ENCODE measurements at regions of chr1 and their contacts with region 1.

Region 1: GRCh38 chr1:172745014-172745413 is 86.1 kb downstream of the FASLG start:
- DNase-seq: peak; percentile 26
- H3K4me3 Mint-ChIP-seq: no peak overlapping the region
- H3K27ac Mint-ChIP-seq: peak overlapping the region; percentile 4
- H3K4me1 Mint-ChIP-seq: peaks cover 29% of the 10 kb centered on the region
- H3K27me3 Mint-ChIP-seq: peaks cover 9% of the 10 kb centered on the region

Region 2: GRCh38 chr1:172682812-172683211 is 62.2 kb before region 1 on chr1:
- CTCF ChIA-PET with region 1: no interaction called
- POLR2A ChIA-PET with region 1: no interaction called
- intact Hi-C with region 1: no loop called
- DNase-seq: no peak
- H3K4me3 Mint-ChIP-seq: no peak overlapping the region
- H3K27ac Mint-ChIP-seq: no peak overlapping the region
- H3K4me1 Mint-ChIP-seq: peaks cover 31% of the 10 kb centered on the region
- H3K27me3 Mint-ChIP-seq: no peaks in the 10 kb centered on the region

Region 3: DNA sequence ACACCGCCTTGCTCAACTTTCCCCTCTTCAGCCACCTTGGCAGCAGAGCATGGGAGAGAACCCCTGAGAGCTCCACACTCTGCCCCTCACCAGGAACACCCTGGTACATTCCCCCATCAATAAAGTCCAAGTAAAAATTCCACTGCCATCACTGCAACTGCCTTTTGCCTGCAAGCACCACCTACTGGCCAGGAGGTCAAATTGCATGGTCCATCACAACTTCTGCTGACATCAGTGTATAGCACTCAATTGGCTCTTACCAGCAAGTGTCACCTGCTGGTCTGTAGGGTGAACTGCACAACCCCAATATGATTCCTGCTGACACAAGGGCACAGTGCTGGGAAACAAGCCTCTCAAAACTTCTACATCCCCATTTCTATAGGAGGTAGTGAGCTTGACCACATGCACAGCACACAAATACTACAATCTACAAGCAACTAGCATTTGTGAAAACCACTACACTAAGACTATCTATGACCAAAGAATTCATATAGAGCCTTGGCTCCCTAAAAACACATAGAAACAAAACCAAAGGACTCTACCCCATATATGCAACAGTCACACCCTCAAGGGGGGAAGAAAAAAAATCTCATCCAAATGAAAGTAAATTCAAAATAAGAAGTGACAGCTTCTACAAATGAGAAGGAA is 16.9 kb before region 1 on chr1:
- CTCF ChIA-PET with region 1: interaction called, 54 read pairs
- POLR2A ChIA-PET with region 1: no interaction called
- intact Hi-C with region 1: no loop called
- DNase-seq: peak; percentile 69
- H3K4me3 Mint-ChIP-seq: no peak overlapping the region
- H3K27ac Mint-ChIP-seq: no peak overlapping the region
- H3K4me1 Mint-ChIP-seq: peaks cover 18% of the 10 kb centered on the region
- H3K27me3 Mint-ChIP-seq: peaks cover 4% of the 10 kb centered on the region

Region 4: DNA sequence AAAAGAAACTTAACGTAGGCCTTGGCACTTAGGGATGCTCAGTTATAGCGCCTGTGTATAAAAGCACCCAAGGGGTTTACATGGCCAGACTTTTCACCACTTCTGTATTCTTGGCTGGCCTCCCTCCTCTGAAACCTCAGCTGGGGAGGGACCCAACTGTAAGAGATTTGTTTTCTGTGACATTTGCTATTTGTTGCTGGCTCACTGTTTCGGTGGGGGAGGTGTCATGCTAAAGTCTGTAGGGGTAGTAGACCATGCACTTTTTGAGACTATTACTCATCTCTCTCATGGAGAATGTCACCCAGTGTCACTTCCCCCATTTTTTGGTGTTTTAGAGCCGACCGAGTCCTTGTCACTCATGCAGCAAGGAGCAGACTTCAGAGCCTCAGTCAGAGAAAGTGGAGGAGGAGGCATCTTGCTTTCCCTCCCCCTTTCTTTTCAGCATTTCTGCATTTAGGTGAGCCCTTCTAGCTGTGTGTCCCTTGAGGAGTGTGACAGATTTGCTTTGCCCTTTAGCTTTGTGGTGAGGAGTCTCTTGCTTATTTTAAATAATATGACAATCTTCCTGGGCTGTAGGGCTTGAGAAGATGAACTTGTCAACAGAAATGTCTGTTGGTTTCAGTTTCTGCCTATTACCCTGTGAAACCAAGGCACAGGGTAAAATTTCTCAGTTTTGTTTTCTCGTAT is 74.0 kb after region 1 on chr1:
- CTCF ChIA-PET with region 1: interaction called, 25 read pairs
- POLR2A ChIA-PET with region 1: interaction called, 3 read pairs
- intact Hi-C with region 1: loop called (anchors 1 kb)
- DNase-seq: peak; percentile 69
- H3K4me3 Mint-ChIP-seq: peak overlapping the region; percentile 4
- H3K27ac Mint-ChIP-seq: peak overlapping the region; percentile 63
- H3K4me1 Mint-ChIP-seq: peaks cover 24% of the 10 kb centered on the region
- H3K27me3 Mint-ChIP-seq: peaks cover 11% of the 10 kb centered on the region

Region 5: DNA sequence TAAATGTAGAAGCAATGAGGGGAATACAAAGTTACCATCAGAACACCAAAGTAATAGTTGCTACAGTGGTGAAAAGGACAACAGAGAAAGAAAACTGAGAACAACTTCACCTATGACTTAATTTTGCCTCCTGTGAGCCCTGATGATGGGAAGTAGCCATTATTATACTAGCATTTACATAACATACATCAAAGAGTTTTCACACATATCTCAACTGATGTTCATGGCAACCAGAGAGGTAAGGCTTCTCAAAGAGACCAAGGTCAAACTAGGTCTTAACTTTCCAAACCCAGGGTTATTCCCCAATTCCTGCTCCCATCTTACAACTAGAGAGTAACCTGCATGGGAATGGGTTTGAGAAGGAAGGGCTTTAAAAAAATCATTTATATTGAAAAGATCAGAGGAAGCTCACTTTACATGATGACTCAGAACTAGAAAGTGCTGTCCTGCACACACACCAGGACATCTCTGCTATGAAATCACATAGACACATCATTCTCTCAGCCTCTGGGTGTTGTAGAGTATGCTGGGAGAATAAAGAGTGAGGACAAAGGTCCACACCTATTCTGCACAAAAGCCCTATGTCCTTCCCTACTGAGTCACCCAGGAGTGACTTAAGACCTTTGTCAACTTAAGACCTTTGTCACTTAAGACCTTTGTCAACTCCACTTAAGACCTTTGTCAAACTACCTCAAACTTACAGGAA is 126.0 kb after region 1 on chr1:
- CTCF ChIA-PET with region 1: interaction called, 3 read pairs
- POLR2A ChIA-PET with region 1: no interaction called
- intact Hi-C with region 1: loop called (anchors 1 kb)
- DNase-seq: no peak
- H3K4me3 Mint-ChIP-seq: no peak overlapping the region
- H3K27ac Mint-ChIP-seq: no peak overlapping the region
- H3K4me1 Mint-ChIP-seq: peaks cover 37% of the 10 kb centered on the region
- H3K27me3 Mint-ChIP-seq: peaks cover 13% of the 10 kb centered on the region

Region 6: DNA sequence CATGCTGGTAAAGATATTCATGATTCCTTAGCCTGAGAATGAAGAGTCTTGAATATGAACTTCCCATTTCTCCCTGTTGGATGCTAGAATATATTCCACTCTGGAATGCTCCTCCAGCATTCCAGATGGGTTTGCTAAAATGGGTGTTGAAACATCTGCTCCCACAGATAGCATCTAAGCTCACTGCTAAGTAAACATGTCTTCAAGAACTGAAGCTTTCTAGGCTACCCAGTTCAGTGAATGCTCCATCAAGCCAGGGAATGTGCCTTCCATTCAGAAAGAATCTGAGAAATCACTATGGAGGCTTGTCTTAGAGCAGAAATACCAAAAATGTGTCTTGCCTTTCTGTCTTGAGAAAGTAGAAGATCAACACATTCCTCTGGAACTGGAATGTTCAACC is 224.6 kb after region 1 on chr1:
- CTCF ChIA-PET with region 1: interaction called, 3 read pairs
- POLR2A ChIA-PET with region 1: no interaction called
- intact Hi-C with region 1: loop called (anchors 1 kb)
- DNase-seq: no peak
- H3K4me3 Mint-ChIP-seq: no peak overlapping the region
- H3K27ac Mint-ChIP-seq: no peak overlapping the region
- H3K4me1 Mint-ChIP-seq: peaks cover 10% of the 10 kb centered on the region
- H3K27me3 Mint-ChIP-seq: peaks cover 6% of the 10 kb centered on the region

Region 7: GRCh38 chr1:173297798-173298391 is 552.9 kb after region 1 on chr1:
- CTCF ChIA-PET with region 1: interaction called, 7 read pairs
- POLR2A ChIA-PET with region 1: no interaction called
- intact Hi-C with region 1: loop called (anchors 5 kb)
- DNase-seq: peak; percentile 69
- H3K4me3 Mint-ChIP-seq: no peak overlapping the region
- H3K27ac Mint-ChIP-seq: no peak overlapping the region
- H3K4me1 Mint-ChIP-seq: peaks cover 39% of the 10 kb centered on the region
- H3K27me3 Mint-ChIP-seq: peaks cover 1% of the 10 kb centered on the region

Region 8: DNA sequence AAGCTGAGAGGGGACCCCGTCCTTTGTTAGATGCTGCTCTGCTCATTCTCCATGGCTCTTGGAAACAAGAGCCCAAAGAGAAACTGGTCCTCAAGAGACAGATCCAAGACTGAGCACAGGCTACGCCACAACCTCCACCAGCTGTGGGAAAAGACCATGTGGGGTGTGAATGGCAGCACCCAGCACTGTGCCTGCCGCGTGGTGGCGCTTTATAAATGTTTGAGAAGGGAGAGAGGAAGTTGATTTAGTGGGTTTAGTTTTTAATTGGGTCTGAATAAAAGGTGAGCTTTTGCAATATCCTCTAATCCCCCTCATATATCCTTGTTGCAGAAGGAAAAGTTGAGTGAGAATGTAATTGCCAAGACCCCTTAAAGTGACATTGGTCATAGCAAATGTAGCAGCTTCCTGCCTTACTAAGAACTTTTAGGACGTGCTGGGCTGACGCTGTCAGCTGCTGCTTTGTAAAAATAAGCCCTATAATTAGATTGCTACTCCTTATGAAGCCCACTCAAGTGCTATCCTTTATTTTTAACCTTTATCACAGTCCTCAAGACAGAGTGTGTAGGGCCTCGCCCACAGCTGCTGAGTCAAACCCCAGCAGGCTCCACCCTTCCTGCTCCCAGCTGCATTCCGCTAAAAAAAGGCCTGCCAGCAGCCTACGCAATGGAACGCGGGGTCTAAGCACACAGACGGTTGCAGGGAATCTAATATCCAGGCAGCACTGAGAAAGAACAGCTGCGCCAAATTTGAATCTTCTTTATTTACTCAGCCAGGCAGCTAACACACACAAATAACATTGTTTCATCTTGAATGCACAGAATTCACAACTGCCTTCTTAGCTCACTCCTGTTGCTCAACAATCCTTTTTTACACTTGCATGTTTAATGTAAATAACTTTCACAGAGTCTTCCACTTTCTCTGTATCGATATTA is 684.7 kb after region 1 on chr1:
- CTCF ChIA-PET with region 1: interaction called, 17 read pairs
- POLR2A ChIA-PET with region 1: no interaction called
- intact Hi-C with region 1: no loop called
- DNase-seq: peak; percentile 79
- H3K4me3 Mint-ChIP-seq: peak overlapping the region; percentile 20
- H3K27ac Mint-ChIP-seq: peak overlapping the region; percentile 55
- H3K4me1 Mint-ChIP-seq: peaks cover 19% of the 10 kb centered on the region
- H3K27me3 Mint-ChIP-seq: no peaks in the 10 kb centered on the region

Measured in activated CD4-positive, alpha-beta memory T cell treated with anti-CD3 and anti-CD28 coated beads for 36 hours (primary cell).